Right cardiac atrium (tissue), 5 donors: ENCODE measurements at regions of chr6 and their contacts with region 1.

Region 1: DNA sequence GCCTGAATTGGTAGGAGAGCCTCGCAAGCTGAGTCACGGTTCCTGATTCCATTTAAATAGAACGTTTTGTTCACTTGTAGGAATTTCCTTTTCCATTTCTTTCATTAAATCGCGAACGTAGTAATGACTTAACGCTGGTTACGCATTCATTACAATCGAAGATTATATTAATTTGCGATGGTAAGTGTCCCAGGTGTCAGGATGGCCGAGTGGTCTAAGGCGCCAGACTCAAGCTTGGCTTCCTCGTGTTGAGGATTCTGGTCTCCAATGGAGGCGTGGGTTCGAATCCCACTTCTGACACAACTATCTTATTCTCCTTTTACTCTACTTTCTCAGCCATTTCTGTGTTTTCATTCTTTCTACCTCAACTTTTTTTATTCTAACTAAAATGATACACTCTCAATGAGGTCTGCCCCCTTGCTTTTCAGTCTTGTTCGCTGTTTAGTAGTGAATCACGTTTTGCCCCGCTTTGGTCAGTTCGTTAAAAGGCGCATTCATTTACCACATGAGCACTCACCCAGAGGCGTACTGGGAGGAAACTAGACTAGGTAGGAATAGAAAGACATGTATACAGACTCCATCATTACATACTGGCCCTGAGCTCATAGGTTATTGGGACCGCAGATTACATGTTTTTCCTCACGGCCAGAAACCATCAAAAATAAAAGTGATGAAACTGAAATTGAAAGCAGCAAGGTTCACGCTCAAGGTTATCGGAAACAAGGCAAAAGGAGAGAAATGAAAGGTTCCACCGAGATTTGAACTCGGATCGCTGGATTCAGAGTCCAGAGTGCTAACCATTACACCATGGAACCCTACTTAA is 17.3 kb upstream of the TRIM27 start:
- DNase-seq: peak; percentile 68 to 82 (median 68)
- ATAC-seq: peak; percentile 91 to 93
- H3K4me3 ChIP-seq: peak overlapping the region; percentile 94
- H3K27ac ChIP-seq: peak overlapping the region; percentile 91
- H3K4me1 ChIP-seq: no peaks in the 10 kb centered on the region
- H3K27me3 ChIP-seq: no peaks in the 10 kb centered on the region

Region 2: DNA sequence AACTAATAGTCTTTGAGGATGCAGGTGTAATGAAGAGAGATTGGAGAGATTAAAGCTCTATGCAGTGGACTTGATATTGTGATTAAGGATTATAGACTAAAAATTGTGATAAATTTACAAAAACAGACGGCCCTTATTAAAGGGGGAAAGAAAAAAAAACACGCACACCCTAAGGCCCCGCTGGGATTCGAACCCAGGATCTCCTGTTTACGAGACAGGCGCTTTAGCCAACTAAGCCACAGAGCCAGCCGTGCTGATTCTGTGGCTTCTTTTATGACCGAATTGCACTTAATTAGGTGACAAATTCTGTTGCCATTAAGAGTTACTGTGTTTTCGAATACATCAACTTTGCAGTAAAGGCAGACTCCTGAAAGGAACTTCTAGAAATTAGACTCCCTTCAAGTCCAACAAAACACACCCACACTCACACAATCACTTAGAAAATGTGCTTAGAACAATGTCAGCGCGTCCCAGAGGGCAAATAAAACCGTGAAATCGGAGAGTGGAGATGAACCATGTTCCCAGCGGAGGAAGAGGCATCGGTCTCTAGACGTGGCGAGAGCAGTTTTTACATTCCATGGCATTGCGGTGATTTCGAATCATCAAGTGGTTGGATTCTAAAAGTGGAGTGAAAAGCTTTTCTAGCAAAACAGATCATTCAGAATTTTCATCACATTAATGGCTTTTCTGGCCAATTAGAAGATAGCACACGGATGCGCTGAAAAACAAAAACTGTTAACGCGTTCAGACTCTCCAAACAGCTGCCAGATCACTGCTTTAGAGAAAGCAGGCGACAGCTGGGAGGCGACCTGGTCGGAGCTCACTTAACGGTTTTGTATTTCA is 292.8 kb before region 1 on chr6:
- intact Hi-C with region 1: no loop called
- DNase-seq: peak in 2 of 3 donors; percentile 51 to 70
- ATAC-seq: peak in 1 of 2 donors; percentile 75
- H3K4me3 ChIP-seq: peak overlapping the region; percentile 62
- H3K27ac ChIP-seq: no peak overlapping the region
- H3K4me1 ChIP-seq: no peaks in the 10 kb centered on the region
- H3K27me3 ChIP-seq: no peaks in the 10 kb centered on the region

Region 3: GRCh38 chr6:28742668-28743270 is 198.3 kb before region 1 on chr6:
- intact Hi-C with region 1: no loop called
- DNase-seq: no peak
- ATAC-seq: no peak
- H3K4me3 ChIP-seq: no peak overlapping the region
- H3K27ac ChIP-seq: no peak overlapping the region
- H3K4me1 ChIP-seq: no peaks in the 10 kb centered on the region
- H3K27me3 ChIP-seq: peaks cover 2% of the 10 kb centered on the region

Region 4: DNA sequence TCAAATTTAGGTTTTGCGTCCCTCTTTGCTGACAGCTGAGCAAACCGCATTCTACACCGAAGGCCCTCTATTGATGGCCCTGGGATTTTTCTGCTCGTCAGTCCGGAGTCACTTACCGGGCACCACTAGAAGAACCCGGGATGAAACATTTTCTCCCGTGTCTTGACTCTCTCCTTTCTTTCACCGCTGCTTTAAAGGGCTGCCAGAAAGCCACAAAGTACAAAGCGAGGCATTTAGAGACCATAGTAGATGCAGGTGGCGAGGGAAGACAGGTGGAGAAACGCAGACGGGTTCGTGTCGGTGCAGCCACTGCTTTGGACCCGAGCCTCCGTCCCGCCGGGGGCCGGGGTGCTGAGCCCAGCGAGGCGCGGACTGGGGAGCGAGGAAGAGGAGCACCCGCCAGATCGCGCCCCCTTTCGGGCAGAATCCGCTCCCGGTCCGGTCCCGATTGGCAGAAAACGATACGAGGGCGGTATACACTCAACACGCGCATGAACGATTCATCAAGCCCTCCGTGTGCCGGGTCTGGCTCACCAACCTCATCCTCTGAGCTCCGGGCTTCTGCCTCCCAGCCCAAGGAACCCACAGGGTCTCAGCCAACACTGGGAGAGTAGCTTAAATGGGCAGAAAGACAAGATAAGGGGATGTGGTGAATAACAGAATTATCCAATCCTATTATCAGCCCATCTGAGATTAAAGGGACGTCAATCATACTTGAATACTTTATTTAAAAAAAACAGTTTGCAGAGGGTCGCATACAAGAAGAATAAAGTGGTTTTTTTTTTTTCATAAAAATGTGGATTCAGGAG is 102.2 kb before region 1 on chr6:
- intact Hi-C with region 1: loop called in 1 of 4 experiments (anchors 5 kb)
- DNase-seq: peak; percentile 84 to 93 (median 92)
- ATAC-seq: peak; percentile 94 to 97
- H3K4me3 ChIP-seq: peak overlapping the region; percentile 73
- H3K27ac ChIP-seq: peak overlapping the region; percentile 53
- H3K4me1 ChIP-seq: no peaks in the 10 kb centered on the region
- H3K27me3 ChIP-seq: no peaks in the 10 kb centered on the region

Region 5: GRCh38 chr6:28863604-28864320 is 77.3 kb before region 1 on chr6:
- intact Hi-C with region 1: loop called in 1 of 4 experiments (anchors 10 kb)
- DNase-seq: peak; percentile 57 to 80 (median 77)
- ATAC-seq: peak; percentile 88 to 90
- H3K4me3 ChIP-seq: peak overlapping the region; percentile 78
- H3K27ac ChIP-seq: no peak overlapping the region
- H3K4me1 ChIP-seq: peaks cover 5% of the 10 kb centered on the region
- H3K27me3 ChIP-seq: no peaks in the 10 kb centered on the region

Region 6: DNA sequence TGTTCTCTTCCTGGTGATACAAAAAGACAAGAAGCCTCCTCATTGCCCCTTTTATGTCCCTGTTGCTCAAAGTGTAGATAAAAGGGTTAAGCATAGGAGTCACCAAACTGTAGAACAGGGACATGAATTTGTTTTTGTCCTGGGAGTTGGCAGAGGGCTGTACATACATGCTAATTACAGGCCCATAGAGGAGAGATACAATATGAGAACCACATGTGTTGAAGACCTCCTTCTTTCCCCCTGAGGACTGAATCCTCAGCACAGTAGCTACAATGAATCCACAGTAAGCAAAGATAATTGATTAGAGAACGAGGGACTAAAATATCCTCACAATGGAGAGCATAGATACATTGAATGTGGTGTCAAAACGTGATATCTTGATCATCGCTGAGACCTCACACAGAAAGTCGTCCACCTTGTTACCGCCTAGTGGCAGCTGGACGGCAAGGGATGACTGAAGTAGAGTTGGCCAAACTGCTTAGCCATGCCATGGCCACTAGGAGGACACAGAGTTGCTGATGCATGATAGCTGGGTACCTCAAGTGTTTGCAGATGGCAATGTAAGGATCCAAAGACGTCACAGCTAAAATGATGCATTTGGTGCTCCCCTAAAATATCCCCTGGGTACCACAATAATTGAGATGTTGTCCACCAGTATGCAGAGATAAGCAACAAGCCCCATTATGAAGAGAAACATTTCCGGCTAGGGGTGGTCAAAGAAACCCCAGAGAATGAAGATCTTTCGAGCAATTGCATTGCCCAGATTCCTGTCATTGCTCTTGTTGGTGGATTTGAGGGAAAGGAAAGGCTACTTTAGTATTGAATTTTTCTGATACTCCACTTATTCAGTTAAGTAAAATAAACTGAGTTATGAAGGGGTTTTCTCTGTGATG is 131.0 kb after region 1 on chr6:
- intact Hi-C with region 1: no loop called
- DNase-seq: no peak
- ATAC-seq: no peak
- H3K4me3 ChIP-seq: no peak overlapping the region
- H3K27ac ChIP-seq: no peak overlapping the region
- H3K4me1 ChIP-seq: no peaks in the 10 kb centered on the region
- H3K27me3 ChIP-seq: no peaks in the 10 kb centered on the region